ENCODE measurements at regions of chr4 and their contacts with region 1.

Region 1: GRCh38 chr4:73142995-73143547 is 73.6 kb upstream of the COX18 start:
- DNase-seq: peak; percentile 14
- ATAC-seq: no peak
- H3K4me3 ChIP-seq: no peak overlapping the region
- H3K27ac ChIP-seq: no peak overlapping the region
- H3K4me1 ChIP-seq: no peaks in the 10 kb centered on the region
- H3K27me3 ChIP-seq: no peaks in the 10 kb centered on the region
- CTCF ChIP-seq: peak; percentile 66

Region 2: DNA sequence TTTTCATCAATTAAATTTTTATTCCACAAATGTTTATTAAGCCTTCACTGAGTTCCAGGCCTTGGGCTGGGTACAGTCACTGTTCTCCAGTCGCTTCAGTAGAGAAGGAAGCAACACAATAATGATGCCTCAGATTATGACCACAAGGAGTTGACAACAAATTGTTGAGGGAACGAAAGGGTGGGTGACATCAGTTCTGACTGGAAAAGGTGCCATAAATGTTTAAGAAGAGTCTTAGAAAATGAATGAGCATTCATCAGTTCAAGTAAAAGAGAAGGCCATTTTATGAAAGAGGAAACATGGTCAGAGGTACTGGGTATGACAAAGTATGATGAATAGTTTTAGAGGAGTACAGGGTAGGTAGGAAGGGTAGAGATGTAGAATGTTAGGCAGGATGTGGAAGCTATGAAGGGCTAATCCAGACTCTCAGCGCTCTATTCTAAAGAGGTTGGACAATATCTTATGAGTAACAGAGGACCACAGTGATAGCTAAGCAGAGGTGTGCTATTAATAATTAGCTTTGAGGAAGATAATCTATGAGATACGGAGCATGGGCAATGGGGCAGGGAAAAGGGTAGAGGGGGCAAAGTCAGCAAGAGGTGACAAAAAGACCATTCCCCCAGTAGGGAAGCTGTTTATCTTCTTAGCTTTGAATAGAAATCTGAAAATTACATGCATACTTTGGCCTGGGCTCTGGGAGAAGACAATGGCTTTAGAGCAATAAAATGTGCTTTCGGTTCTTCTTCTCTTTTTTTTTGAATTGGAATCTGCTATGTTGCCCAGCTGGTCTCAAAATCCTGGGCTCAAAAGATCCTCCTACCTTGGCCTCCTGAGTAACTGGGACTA is 313.3 kb after region 1 on chr4:
- CTCF ChIA-PET with region 1: no interaction called
- POLR2A ChIA-PET with region 1: no interaction called
- intact Hi-C with region 1: no loop called
- DNase-seq: no peak
- ATAC-seq: no peak
- H3K4me3 ChIP-seq: no peak overlapping the region
- H3K27ac ChIP-seq: no peak overlapping the region
- H3K4me1 ChIP-seq: no peaks in the 10 kb centered on the region
- H3K27me3 ChIP-seq: peaks cover 37% of the 10 kb centered on the region
- CTCF ChIP-seq: no peak

Region 3: GRCh38 chr4:74166823-74167222 is 1023.8 kb after region 1 on chr4:
- CTCF ChIA-PET with region 1: no interaction called
- POLR2A ChIA-PET with region 1: interaction called, 10 read pairs
- intact Hi-C with region 1: no loop called
- DNase-seq: no peak
- ATAC-seq: no peak
- H3K4me3 ChIP-seq: no peak overlapping the region
- H3K27ac ChIP-seq: no peak overlapping the region
- H3K4me1 ChIP-seq: peaks cover 16% of the 10 kb centered on the region
- H3K27me3 ChIP-seq: no peaks in the 10 kb centered on the region
- CTCF ChIP-seq: no peak